RWPE1 (cell line): ENCODE measurements at regions of chr10 and their contacts with region 1.

Region 1: DNA sequence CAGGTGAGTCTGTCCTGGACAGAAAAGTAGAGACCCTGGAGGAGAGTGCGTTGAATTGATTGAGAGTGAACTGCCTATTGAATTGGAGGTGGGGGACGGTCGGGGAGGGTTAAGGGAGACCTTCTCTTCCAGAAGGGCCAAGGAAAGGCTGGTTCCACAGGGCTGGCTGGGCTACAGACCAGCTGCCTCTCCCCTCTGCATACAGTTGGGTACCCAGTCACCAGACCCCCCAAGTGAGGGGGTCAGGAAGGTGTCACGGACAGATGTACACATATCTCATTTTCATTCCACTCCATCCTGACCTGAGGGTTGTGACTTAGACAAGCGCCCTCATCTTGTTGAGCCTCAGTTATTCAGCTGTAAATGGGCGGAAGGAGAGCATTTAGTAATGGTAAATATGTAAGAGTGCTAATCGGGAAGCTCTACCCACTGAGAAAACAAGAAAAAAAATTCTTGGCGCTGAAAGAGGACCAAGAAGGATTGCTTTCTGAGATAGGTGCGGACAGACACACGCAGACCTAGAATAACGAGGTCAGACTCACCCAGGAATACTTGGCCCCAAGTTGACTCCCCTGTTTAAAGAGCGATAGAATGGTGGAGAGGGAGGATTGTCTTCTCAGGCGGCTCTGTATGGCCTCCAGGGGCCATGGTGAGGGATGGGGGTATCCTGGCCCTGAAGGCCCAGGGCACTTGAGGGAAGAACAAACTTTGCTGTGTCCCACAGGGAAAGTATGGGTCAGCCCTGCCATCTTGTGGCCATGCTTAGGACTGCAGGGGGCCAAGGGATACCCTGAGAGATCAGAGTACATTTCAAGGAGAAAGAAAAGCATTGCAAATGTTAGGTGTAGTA is 7.2 kb upstream of the MBL2 start:
- DNase-seq: peak; percentile 72
- H3K27ac ChIP-seq: no peak overlapping the region
- CTCF ChIP-seq: peak; percentile 87

Region 2: DNA sequence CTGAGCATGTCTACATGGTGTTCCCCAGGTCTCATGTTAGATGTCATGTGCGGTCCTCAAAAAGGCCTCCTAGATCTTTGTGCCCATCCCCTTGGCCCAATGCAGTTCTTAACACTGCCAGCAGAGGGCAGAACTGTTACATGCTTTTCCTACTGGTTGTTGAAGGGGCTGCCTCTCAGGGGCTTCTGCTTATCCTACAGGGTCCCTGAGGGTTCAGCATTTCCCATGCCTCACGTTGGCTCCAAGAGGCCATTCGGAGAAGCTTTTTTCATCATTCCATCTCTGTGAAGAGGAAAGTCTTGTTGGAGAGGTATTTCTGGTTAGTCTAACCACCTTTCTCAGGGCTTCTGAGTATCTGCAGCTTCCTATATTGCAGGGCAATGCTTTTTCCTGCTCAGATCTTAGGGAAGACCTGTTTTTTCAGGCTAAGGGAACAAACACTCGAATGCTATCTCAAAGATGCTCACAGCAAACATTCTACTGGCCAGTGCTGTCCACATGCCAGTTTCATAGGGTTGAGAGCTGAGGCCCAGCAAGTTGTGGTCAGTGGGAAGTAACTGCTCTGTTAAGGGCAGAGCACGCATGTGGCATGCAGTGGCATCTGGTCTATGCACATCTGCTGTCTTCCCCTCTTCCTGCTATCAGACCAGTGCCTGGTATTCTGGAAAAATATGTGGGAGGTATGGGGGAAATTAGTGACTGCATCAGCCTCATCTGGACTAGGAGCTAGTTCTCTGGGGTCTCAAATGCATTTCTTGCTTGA is 38.7 kb before region 1 on chr10:
- CTCF ChIA-PET with region 1: interaction called, 14 read pairs
- POLR2A ChIA-PET with region 1: no interaction called
- DNase-seq: peak; percentile 32
- H3K27ac ChIP-seq: no peak overlapping the region
- CTCF ChIP-seq: peak; percentile 62